GM10248 (cell line): ENCODE measurements at regions of chr6 and their contacts with region 1.

Region 1: DNA sequence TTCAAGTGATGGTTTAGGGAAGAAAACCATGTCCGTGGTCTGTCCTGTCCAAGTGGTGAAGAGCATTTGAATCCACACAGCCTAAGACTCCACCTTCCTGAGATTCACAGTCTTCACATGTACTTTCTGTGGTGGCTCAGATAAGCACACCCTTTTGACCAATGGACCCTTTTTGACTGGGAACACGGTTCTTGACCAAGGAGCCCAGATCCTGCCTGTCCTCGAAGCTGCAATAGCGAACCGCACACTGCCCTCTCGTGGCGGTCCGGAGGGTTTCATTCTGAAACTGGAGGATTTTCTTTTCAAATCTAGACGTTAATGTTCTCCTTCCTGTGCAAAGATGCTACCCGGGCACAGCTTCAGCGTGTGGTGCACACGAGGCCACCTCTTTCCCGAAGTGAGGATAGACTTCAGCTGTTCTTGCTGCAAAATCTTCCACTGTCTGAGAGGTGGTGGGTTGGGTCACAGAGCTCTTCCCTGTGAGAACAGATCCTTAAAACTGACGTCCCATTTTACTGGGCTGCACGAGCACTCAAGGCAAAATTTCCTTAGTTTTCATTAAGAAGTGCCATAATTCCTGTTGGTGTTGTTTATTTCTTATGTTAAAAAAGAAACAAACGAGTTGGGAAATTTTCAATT is 90.5 kb downstream of the SYNJ2 start:
- DNase-seq: peak; percentile 85
- CTCF ChIP-seq: peak; percentile 81

Region 2: DNA sequence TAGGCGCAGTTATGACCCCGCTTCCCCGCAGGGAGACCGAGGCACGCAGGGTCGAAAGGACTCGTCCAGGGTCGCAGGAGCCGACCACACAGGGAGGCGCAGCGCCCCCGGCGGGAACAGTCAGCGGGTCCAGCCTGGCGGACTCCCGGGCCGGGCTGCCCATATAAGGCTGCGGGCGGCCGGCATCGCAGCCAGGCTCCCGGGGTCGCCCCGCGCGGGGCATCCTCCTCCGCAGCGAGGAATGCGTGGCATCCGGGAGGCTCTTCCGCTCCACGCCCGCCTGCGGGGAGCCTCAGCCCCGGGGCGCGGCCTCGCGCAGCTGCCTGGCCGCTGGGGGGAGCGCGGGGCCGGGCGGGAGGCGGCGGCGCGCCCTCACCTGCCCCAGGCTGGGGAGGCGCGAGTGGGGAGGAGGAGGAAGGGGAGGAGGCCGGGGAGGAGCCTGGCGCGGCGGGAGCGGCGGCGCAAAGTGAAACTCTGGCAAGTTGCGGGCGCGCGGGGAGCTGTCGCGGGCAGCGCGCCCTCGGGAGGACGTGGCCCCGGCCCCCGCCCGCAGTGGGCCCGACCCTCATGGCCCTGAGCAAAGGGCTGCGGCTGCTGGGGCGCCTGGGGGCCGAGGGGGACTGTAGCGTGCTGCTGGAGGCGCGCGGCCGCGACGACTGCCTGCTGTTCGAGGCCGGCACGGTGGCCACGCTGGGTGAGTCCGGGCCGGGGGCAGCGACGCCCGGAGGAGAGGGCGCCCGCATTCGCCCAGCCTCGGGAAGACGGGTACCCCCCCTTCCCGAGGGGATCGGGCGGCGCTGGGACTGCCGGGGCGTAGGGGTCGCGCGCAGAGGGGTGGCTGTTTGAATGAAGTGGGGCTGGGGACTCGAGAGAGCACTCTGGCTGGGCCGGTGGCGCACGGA is 90.6 kb before region 1 on chr6 and contains the start of gene SYNJ2:
- CTCF ChIA-PET with region 1: interaction called, 53 read pairs
- POLR2A ChIA-PET with region 1: no interaction called
- DNase-seq: peak; percentile 84
- CTCF ChIP-seq: peak; percentile 37

Region 3: DNA sequence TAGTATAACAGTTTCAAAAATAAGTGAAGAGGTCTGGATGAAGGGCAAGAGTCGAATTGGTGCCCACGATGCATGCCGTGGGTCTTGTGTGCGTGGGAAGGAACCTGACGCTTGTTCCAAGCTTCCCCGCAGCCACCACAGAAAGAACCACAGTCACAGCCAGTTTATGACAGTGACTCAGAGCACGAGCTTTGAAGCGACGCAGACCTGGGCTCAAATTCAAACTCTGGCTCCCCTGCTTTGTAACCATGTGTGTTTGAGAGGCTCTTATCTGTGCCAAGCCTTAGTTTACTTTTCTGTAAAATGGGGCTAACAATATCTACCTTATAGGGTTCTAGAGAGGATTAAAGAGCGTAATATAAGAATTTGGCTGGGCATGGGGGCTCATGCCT is 25.1 kb before region 1 on chr6:
- CTCF ChIA-PET with region 1: interaction called, 22 read pairs
- POLR2A ChIA-PET with region 1: no interaction called
- DNase-seq: no peak
- CTCF ChIP-seq: no peak

Region 4: GRCh38 chr6:158060455-158061360 is 11.5 kb before region 1 on chr6:
- CTCF ChIA-PET with region 1: interaction called, 119 read pairs
- POLR2A ChIA-PET with region 1: no interaction called
- DNase-seq: no peak
- CTCF ChIP-seq: no peak

Region 5: DNA sequence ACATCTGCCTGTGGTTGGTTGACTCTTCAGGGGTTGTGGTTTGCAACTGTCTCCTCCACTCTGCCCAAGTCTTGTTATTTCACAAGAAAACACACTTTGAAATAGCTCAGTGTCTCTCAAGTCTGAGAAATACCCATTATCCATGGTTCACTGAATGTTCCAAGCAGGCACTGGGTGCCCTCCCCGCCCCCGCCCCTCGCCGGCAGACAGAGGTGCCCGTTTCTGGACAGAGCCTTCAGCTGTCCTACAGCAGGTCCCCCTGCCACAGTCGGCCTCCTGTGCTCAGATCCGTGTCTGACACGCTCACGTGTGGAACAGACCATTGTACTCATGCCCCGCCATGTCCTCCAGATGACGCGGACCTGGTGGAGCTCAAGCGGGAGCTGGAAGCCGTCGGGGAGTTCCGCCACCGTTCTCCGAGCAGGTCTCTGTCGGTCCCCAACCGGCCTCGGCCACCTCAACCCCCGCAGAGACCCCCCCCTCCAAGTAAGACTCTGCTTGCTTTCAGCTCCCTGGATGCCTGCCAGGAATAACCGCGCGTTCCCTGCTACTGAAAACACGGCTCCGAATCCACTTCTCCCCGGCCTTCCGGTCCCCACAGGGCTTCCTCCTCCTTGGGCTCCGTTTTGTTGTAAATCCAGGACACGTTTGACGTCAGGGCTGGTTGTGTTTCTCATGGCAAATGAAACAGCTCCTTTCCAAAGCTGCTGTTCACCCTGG is 14.5 kb after region 1 on chr6:
- CTCF ChIA-PET with region 1: interaction called, 59 read pairs
- POLR2A ChIA-PET with region 1: no interaction called
- DNase-seq: peak; percentile 48
- CTCF ChIP-seq: no peak